ENCODE measurements at regions of chr19 and their contacts with region 1.

Region 1: DNA sequence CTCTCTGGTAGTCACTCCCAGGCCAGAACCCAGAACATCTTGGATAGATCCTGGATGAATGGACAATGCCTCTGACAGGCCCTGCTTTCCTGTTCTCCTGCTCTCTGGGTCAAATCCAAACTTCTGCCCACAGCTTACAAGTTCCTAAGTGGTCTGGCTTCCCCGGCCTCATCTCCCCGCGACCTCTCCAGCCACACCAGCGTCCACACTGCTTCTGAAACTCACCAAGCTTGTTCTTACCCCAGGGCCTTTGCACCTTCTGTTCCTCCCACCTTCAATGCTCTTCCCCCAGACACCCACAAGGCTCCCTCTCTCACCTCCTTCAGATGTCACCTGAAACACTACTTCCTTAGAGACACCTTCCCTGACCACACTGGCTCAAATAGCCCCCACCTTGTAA is 3.5 kb downstream of the OLFM2 start:
- DNase-seq: no peak

Region 2: GRCh38 chr19:10027158-10027693 is 94.4 kb after region 1 on chr19:
- CTCF ChIA-PET with region 1: interaction called, 25 read pairs
- POLR2A ChIA-PET with region 1: no interaction called
- DNase-seq: no peak

Region 3: DNA sequence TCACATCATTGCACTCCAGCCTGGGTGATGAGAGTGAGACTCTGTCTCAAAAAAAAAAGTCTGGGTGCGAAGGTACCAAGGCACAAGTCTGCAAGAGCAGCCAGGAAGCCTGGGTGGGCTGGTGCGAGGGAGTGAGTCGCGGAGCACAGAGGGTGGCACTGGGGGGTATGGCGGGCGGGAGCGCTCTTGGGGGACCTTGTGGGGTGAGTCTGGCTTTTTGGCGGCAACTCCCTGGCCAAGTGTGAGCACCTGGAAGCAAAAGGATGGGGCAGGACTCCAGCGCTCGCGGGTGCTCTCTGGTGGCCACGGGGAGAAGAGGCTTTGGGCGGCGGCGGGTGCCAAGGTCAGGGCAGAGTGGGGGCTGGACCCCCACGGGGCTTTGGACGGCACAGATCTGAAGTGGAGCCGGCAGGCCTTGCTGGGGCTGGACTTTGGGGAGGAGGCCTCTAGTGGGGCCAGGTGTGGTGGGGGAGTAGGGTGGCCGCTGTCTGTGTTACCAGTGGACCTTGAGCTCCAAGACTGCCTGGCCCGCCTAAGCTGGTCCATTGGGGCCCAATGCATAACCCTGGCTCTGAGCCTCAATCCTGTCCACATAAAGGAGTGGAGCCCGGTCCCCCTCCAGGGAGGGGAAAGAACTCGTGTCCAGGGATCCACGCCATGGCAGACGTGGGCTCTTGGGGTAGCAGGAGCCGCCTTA is 180.2 kb after region 1 on chr19:
- CTCF ChIA-PET with region 1: interaction called, 18 read pairs
- POLR2A ChIA-PET with region 1: interaction called, 4 read pairs
- DNase-seq: peak; percentile 62

Measured in HEK293T (cell line).